PC-9 (cell line): ENCODE measurements at regions of chr2 and their contacts with region 1.

Region 1: DNA sequence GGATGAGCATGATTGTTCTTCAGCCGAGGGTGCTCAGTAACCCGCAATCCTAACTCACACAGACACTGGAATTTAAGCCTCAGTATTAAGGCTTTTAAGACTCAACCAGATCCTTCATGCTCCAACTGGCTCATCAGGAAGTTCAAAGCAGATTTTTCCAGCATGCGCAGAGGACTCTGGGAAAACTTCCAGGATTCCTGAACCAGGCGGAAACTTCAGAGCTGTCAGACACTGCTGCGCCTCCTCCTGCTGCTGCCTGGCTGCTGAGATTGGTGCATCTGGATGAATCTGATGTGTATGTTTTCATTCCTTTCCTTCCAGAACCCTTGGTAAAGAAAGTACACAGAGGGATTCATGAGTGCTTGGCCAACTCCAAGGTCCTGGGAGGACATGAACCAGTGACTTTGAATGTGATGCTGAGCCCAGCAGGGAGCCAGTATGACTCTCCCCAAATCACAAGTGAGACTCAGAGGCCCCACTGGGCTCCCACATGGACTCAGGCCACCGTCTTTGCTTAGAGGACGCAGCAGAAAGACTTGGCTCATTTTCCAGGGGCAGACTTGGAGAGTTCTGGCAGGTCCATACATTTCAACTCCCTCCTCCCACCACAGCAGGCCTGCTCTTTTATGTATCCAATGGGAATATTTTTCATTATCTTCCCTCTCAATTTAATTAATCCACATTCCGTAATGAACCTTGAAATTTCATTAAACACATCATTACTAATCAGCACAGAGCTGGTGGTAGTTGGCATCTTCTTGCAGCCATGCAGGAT is 143.5 kb upstream of the HDAC4 start:
- DNase-seq: no peak
- H3K4me3 ChIP-seq: no peak overlapping the region
- H3K27ac ChIP-seq: no peak overlapping the region
- H3K4me1 ChIP-seq: no peaks in the 10 kb centered on the region
- H3K27me3 ChIP-seq: peaks cover 99% of the 10 kb centered on the region
- CTCF ChIP-seq: no peak

Region 2: GRCh38 chr2:239465017-239466001 is 79.0 kb before region 1 on chr2:
- CTCF ChIA-PET with region 1: no interaction called
- POLR2A ChIA-PET with region 1: no interaction called
- intact Hi-C with region 1: no loop called
- DNase-seq: peak in 1 of 2 experiments; percentile 64
- H3K4me3 ChIP-seq: no peak overlapping the region
- H3K27ac ChIP-seq: no peak overlapping the region
- H3K4me1 ChIP-seq: no peaks in the 10 kb centered on the region
- H3K27me3 ChIP-seq: peaks cover 97% of the 10 kb centered on the region
- CTCF ChIP-seq: no peak

Region 3: DNA sequence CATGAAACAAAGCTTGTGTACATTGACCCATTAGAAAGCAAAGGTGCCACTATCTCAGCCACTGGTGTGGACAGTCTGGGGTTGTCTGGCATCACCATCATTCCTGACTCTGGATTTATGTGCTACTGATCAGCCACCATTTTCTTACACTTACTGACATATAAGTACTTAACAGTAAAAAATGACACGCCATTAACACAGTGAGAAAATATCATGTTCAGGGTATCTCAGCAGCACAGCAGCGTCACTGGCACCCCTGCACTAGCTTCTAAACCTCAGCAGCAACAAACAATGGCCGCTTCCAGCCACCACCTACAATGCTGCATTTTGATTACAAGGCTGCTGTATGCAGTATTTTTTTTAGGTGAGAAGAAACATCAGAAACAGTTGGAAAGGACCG is 109.9 kb after region 1 on chr2:
- CTCF ChIA-PET with region 1: no interaction called
- POLR2A ChIA-PET with region 1: no interaction called
- intact Hi-C with region 1: loop called (anchors 5 kb)
- DNase-seq: no peak
- H3K4me3 ChIP-seq: no peak overlapping the region
- H3K27ac ChIP-seq: no peak overlapping the region
- H3K4me1 ChIP-seq: no peaks in the 10 kb centered on the region
- H3K27me3 ChIP-seq: peaks cover 77% of the 10 kb centered on the region
- CTCF ChIP-seq: no peak

Region 4: GRCh38 chr2:239666855-239667376 is 122.6 kb after region 1 on chr2:
- CTCF ChIA-PET with region 1: no interaction called
- POLR2A ChIA-PET with region 1: no interaction called
- intact Hi-C with region 1: no loop called
- DNase-seq: no peak
- H3K4me3 ChIP-seq: no peak overlapping the region
- H3K27ac ChIP-seq: no peak overlapping the region
- H3K4me1 ChIP-seq: no peaks in the 10 kb centered on the region
- H3K27me3 ChIP-seq: peaks cover 95% of the 10 kb centered on the region
- CTCF ChIP-seq: no peak